Dorsolateral prefrontal cortex (tissue), 120 donors: ENCODE measurements at regions of chr18 and their contacts with region 1.

Region 1: GRCh38 chr18:23503038-23503962 is at the start of gene RMC1:
- DNase-seq: peak; percentile 92 to 98 (median 96)
- H3K4me3 ChIP-seq: peak within 1 kb of the TSS; percentile 67 to 99 (median 90)
- H3K27ac ChIP-seq: peak within 1 kb of the TSS; percentile 49 to 97 (median 91)
- H3K27me3 ChIP-seq: no peaks in the 10 kb centered on the region
- CTCF ChIP-seq: peak in 38 of 56 donors; percentile 3 to 64 (median 34)
- total RNA-seq, gene RMC1: 23.8 to 53.6 (median 39.2) TPM

Region 2: DNA sequence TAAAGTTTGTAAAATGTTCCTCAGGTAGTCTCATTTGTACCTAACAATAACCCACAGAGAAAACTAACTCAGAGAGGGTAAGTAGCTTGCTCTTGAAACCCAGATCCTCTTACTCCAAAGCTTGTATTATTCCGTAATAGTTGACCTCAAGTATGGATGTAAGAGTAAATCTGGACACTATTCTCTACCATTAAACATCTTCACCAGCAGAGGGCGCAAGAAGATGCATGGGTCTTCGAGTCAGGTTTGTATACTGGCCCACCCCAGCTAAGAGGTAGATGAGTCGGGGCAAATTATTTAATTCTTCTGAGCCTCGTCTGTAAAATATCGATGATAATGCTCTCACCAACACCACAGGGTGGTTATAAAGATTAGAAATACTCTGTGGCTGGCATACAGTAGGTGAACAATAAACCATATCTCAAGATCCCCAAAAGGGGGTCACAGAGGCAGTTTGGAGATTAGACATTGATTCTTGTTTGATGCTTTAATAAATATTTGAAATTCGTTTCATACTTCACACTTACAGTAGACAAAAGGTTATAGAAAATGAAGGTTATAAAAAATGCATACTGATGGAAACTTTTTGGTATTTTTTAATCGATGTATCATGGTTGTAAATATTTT is 371.5 kb before region 1 on chr18:
- intact Hi-C with region 1: loop called in 1 of 2 experiments (anchors 5 kb)
- DNase-seq: peak in 3 of 10 donors; percentile 36 to 71 (median 63)
- H3K4me3 ChIP-seq: no peak overlapping the region
- H3K27ac ChIP-seq: peak overlapping the region in 1 of 59 donors; percentile 27
- H3K27me3 ChIP-seq: peaks cover 0 to 18% (median 0%) of the 10 kb centered on the region in 45 donors
- CTCF ChIP-seq: peak; percentile 63 to 90 (median 82)

Region 3: DNA sequence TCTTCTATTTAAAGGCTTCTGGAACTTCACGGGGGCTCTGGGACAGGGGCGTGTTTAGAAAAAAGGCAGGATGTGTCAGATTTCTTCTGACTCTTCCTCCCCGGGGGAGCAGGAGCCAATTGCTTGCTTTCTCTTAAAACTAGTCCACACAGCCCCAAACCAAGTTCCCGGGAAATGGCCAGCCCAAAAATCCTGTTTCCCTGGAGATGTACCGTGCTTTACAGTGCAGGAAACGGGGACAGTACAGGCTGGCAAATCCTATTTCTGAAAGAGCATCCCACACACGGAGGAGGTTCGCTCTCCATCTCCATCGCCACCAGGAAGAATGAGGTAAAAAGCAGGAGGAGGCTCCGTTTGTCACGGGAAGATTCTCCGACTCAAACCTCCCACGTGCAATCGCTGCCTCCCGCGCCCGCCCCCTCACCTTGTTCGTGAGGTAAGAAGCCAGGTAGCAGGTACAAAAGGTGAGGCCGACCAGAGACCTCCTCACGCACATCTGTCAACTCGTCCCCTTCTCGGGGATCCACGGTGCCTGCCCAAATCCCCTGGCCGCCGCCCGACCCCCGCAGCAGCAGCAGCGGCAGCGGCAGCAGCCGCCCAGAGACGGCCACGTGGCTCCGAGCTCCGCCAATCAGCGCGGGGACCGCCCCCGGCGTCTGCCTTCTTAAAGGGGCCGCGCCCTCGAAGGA is 65.8 kb before region 1 on chr18:
- intact Hi-C with region 1: loop called (anchors 1 to 5 kb)
- DNase-seq: peak; percentile 88 to 95 (median 90)
- H3K4me3 ChIP-seq: peak overlapping the region; percentile 57 to 93 (median 80)
- H3K27ac ChIP-seq: peak overlapping the region in 53 of 59 donors; percentile 17 to 92 (median 74)
- H3K27me3 ChIP-seq: no peaks in the 10 kb centered on the region
- CTCF ChIP-seq: peak in 4 of 56 donors; percentile 12 to 32 (median 22)

Region 4: DNA sequence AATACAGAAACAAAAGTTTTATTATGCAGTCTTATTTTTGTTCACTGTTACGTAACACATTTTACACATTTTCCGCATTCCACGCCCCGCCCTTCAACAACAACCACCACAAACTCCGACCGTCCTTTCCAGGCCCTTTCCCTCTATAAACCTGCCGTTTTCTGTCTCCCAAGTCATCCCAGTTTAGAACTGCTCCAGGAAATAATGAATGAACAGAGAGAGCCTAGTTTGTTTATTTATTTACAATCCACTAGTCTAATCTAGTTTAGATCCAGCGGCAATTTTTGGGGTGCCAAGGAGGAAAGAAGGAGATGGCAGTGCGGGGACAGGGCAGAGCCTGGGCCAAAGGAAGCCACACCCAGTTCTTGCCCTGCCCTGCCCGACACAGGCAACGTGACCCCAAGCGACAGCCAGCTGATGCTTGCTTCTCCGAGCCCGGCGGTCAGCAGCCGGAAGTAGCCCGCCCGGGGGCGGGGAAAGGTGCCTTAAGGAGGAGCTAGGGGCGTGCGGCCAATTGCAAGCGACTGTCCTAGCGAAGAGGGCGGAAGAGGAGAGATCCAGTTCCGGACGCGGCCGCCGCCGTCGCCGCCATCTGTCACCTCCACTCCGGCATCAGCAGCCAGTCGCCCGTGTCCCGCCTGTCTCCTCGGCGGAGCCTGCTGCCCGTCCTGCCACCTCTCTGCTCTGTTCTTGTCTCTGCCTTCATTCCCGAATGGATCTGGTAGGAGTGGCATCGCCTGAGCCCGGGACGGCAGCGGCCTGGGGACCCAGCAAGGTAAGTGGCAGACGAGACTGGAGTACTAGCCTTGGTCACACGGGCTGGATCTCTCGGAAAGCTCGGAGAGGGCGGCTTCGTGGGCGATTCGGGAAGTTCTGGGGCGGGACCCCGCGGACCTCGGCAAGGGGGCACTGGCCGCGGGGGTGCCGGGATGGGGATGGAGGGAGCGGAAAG is 50.3 kb before region 1 on chr18 and contains the start of gene RIOK3:
- intact Hi-C with region 1: loop called (anchors 1 to 5 kb)
- DNase-seq: peak; percentile 97 to 99 (median 99)
- H3K4me3 ChIP-seq: peak within 1 kb of the TSS; percentile 70 to 100 (median 94)
- H3K27ac ChIP-seq: peak within 1 kb of the TSS; percentile 57 to 98 (median 92)
- H3K27me3 ChIP-seq: no peaks in the 10 kb centered on the region
- CTCF ChIP-seq: peak in 29 of 56 donors; percentile 9 to 59 (median 33)
- total RNA-seq, gene RIOK3: 25.5 to 71.7 (median 52.1) TPM

Region 5: GRCh38 chr18:23573626-23574431 is 70.5 kb after region 1 on chr18:
- intact Hi-C with region 1: no loop called
- DNase-seq: no peak
- H3K4me3 ChIP-seq: peak overlapping the region in 1 of 59 donors; percentile 2
- H3K27ac ChIP-seq: peak overlapping the region in 50 of 59 donors; percentile 2 to 80 (median 62)
- H3K27me3 ChIP-seq: no peaks in the 10 kb centered on the region
- CTCF ChIP-seq: no peak

Region 6: GRCh38 chr18:23586249-23587196 is 83.2 kb after region 1 on chr18 and contains the start of gene NPC1:
- intact Hi-C with region 1: loop called (anchors 1 kb)
- DNase-seq: peak; percentile 82 to 96 (median 90)
- H3K4me3 ChIP-seq: peak within 1 kb of the TSS; percentile 67 to 100 (median 95)
- H3K27ac ChIP-seq: peak within 1 kb of the TSS; percentile 92 to 100 (median 100)
- H3K27me3 ChIP-seq: no peaks in the 10 kb centered on the region
- CTCF ChIP-seq: peak; percentile 90 to 100 (median 98)
- total RNA-seq, gene NPC1: 45.2 to 321 (median 99.6) TPM

Region 7: DNA sequence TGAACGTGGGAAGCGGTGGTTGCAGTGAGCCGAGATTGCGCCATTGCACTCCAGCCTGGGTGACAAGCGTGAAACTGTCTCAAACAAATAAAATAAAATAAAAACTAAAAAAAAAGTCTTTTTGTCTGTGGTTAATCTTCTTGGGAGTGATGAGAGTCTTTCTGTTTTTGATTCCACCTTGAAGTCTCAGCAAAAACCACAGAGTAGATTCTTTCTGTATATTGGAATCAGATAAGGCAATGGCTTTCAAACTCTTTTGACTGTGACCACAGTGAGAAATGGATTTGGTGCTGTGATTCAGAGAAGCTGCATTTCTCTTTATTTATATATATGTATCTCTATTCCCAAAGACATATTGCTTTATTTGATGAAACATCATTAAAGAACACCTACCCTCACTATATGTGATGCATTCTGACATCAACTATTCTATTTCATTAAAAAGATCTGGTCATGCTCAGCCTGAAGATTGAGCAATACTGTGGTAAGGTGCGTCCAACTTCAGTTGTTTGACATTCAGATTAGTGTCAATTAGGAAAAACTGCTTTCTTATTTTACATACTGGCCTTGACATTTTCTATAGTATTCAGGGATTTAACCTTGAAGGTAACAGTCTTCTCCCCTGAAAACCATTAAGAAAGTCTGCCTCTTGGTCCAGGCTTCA is 972.8 kb after region 1 on chr18:
- intact Hi-C with region 1: no loop called
- DNase-seq: no peak
- H3K4me3 ChIP-seq: no peak overlapping the region
- H3K27ac ChIP-seq: no peak overlapping the region
- H3K27me3 ChIP-seq: no peaks in the 10 kb centered on the region
- CTCF ChIP-seq: no peak